ENCODE measurements at regions of chr15 and their contacts with region 1.

Region 1: GRCh38 chr15:82966671-82967071 is 14.2 kb upstream of the HOMER2 start:
- DNase-seq: peak; percentile 72
- H3K4me3 Mint-ChIP-seq: no peak overlapping the region
- H3K27ac Mint-ChIP-seq: no peak overlapping the region
- H3K4me1 Mint-ChIP-seq: peaks cover 14% of the 10 kb centered on the region
- H3K27me3 Mint-ChIP-seq: peaks cover 29% of the 10 kb centered on the region

Region 2: DNA sequence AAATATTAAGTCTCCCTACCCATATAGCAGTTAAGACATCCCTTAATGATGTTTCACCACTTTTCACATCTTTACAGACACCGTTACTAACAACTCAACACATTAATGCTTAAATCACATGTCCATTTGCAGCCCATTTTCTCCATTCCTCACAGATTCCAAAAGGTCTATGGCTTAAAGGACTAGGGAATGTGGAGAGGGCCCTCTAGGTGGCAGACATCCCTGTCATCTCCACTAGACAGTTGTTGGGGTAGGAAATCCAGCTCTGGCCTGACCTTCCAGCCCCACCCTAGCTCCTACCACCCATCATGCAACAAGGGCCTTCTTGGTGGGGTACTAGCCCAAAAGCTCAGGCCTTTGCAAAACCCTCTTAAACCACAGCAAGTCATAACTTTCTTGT is 344.7 kb before region 1 on chr15:
- intact Hi-C with region 1: no loop called
- DNase-seq: no peak
- H3K4me3 Mint-ChIP-seq: no peak overlapping the region
- H3K27ac Mint-ChIP-seq: no peak overlapping the region
- H3K4me1 Mint-ChIP-seq: no peaks in the 10 kb centered on the region
- H3K27me3 Mint-ChIP-seq: peaks cover 8% of the 10 kb centered on the region

Region 3: GRCh38 chr15:82952158-82953081 is 14.3 kb before region 1 on chr15 and contains the start of gene HOMER2:
- intact Hi-C with region 1: loop called (anchors 1 kb)
- DNase-seq: peak; percentile 75
- H3K4me3 Mint-ChIP-seq: peak within 1 kb of the TSS; percentile 67
- H3K27ac Mint-ChIP-seq: peak within 1 kb of the TSS; percentile 80
- H3K4me1 Mint-ChIP-seq: peaks cover 2% of the 10 kb centered on the region
- H3K27me3 Mint-ChIP-seq: peaks cover 19% of the 10 kb centered on the region
- total RNA-seq, gene HOMER2: 29.3 and 32.1 TPM in 2 replicates

Measured in activated CD4-positive, alpha-beta T cell treated with anti-CD3 and anti-CD28 coated beads, Interleukin-2, amount 10 ng/mL, durations not matched to agents 24 days and 14 days (primary cell).